ENCODE measurements at regions of chr15 and their contacts with region 1.

Region 1: DNA sequence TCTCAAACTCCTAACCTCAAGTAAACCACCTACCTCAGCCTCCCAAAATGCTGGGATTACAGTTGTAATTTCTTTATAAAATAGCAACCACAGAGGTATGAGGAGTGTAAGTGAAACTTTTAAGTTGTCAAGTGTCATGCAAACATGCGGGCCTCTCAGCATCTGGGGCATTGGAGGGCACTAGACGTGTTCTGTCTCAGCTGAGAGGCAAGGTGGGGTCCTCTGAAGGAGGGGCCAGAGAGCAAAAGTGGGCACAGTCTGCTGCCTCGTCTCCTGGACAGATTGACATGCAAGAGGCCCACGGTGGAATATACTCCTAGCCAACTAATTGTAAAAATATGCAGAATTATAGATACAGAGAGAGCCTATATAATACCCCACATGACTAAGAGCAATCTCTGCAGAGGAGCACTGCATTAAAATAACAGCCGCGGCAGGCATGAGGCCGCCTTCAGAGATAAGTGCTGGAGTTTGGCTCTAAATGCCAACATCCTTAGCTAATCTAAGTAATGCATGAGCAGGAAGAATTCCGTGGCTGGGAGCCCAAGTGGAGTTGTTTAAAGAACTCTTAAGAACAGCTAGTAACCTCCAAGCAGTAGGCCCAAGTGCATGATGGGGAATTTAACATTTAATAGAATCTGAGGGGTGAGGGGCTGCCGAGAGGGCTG is 87.8 kb upstream of the RNU6-1 start:
- DNase-seq: peak in 1 of 2 experiments; percentile 11
- H3K4me3 ChIP-seq: no peak overlapping the region
- H3K27ac ChIP-seq: no peak overlapping the region
- H3K4me1 ChIP-seq: peaks cover 7% of the 10 kb centered on the region; the same call in 1 of the 2 replicates
- H3K27me3 ChIP-seq: no peaks in the 10 kb centered on the region
- CTCF ChIP-seq: no peak

Region 2: DNA sequence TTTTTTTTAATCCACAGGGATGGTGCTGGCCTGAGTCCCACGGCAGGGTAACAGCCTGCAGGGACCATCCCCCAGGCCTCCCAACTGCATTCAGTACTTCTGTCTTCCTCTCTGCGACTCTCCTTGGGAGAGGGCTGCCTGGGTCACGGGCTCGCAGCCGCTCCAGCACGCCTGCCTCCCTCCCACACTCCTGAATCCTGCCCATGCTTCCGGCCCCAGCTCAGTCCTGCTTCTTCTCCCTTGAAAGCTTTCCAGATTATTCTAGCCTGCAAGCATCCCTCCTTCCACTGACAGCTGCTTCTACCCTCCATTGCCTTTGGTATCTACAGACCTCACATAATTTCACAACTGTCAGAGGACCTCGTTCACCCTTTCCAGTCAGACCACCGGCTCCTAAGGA is 1706.5 kb before region 1 on chr15:
- CTCF ChIA-PET with region 1: interaction called, 14 read pairs
- POLR2A ChIA-PET with region 1: no interaction called
- intact Hi-C with region 1: no loop called
- DNase-seq: no peak
- H3K4me3 ChIP-seq: no peak overlapping the region
- H3K27ac ChIP-seq: no peak overlapping the region
- H3K4me1 ChIP-seq: no peaks in the 10 kb centered on the region
- H3K27me3 ChIP-seq: peaks cover 14% of the 10 kb centered on the region
- CTCF ChIP-seq: no peak

Region 3: GRCh38 chr15:67495585-67495984 is 432.1 kb before region 1 on chr15:
- CTCF ChIA-PET with region 1: no interaction called
- POLR2A ChIA-PET with region 1: no interaction called
- intact Hi-C with region 1: no loop called
- DNase-seq: no peak
- H3K4me3 ChIP-seq: no peak overlapping the region
- H3K27ac ChIP-seq: no peak overlapping the region
- H3K4me1 ChIP-seq: no peaks in the 10 kb centered on the region
- H3K27me3 ChIP-seq: no peaks in the 10 kb centered on the region
- CTCF ChIP-seq: no peak

Region 4: DNA sequence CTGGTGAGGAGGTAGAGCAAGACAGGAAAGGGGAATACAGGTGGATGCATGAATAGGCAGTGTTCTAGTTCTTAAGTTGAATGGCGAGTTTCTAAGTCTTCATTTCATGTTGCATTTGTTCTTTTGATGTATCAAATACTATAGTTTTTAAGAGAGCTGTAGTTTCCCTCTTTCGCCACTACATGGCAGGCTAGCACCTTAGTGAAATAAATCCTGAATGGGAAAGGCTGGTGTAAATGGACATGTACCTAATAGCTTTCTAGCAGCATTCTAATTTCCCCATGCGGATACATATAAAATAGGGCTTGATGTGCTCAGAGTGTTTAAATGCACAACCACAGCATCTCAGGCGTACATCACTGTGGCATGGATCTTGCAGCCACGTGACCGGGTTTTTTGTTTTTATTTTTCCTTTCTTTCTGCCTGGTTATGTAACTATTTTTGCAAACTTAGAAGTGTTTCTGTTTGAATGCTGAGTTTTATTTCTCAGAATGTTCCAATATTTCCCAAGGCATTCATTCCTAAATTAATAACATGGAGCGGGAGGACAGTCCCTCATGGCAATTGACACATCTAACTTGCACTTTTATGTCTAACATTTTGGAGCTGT is 325.4 kb after region 1 on chr15:
- CTCF ChIA-PET with region 1: no interaction called
- POLR2A ChIA-PET with region 1: no interaction called
- intact Hi-C with region 1: no loop called
- DNase-seq: peak; percentile 46 to 76
- H3K4me3 ChIP-seq: no peak overlapping the region
- H3K27ac ChIP-seq: no peak overlapping the region
- H3K4me1 ChIP-seq: no peaks in the 10 kb centered on the region
- H3K27me3 ChIP-seq: no peaks in the 10 kb centered on the region
- CTCF ChIP-seq: peak; percentile 81

Measured in PC-9 (cell line).